Naive thymus-derived CD4-positive, alpha-beta T cell (primary cell): ENCODE measurements at regions of chr5 and their contacts with region 1.

Region 1: DNA sequence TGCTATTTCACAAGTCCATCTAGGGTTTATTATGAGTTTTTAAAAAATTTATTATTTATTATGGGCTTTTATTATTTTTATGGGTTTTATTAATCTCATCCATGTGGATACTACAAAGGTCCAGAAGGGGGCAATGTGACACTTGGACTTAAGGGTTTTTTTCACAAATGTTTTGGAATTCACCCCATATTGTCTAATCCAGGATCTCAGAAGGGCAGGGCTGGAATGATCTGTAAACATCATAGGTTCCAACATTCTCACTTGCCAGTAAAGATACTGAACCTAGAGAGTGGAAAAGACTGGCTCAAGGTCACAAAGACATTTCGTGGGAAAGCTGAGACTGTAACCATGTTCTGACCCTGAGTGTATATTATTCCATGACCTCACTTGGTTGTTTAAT is 35.6 kb downstream of the NIM1K start:
- DNase-seq: no peak
- ATAC-seq: no peak
- H3K4me3 ChIP-seq: no peak overlapping the region
- H3K4me3 Mint-ChIP-seq: no peak overlapping the region
- H3K27ac ChIP-seq: no peak overlapping the region
- H3K27ac Mint-ChIP-seq: no peak overlapping the region
- H3K4me1 ChIP-seq: no peaks in the 10 kb centered on the region
- H3K4me1 Mint-ChIP-seq: no peaks in the 10 kb centered on the region
- H3K27me3 ChIP-seq: no peaks in the 10 kb centered on the region
- H3K27me3 Mint-ChIP-seq: no peaks in the 10 kb centered on the region

Region 2: DNA sequence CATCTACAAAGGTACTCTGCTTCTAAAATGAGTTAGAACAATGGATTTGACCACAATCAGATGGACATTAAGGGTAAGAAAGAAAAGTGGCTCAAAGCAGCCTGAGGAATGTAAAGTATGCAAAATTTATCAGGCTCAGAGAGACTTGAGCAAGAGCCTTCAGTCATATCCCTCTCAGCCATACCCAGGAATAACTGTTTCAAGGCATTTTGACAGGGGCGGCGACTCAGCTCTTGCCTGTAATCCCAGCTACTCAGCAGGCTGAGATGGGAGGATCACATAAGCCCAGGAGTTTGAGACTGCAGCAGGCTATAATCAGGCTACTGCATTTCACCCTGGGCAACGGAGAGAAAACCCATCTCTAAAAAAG is 148.7 kb before region 1 on chr5:
- CTCF ChIA-PET with region 1: no interaction called
- POLR2A ChIA-PET with region 1: no interaction called
- intact Hi-C with region 1: no loop called
- DNase-seq: no peak
- ATAC-seq: no peak
- H3K4me3 ChIP-seq: no peak overlapping the region
- H3K4me3 Mint-ChIP-seq: no peak overlapping the region
- H3K27ac ChIP-seq: no peak overlapping the region
- H3K27ac Mint-ChIP-seq: no peak overlapping the region
- H3K4me1 ChIP-seq: peaks cover 5% of the 10 kb centered on the region in 2 donors
- H3K4me1 Mint-ChIP-seq: peaks cover 16 to 34% (median 27%) of the 10 kb centered on the region in 7 donors
- H3K27me3 ChIP-seq: no peaks in the 10 kb centered on the region
- H3K27me3 Mint-ChIP-seq: no peaks in the 10 kb centered on the region

Region 3: DNA sequence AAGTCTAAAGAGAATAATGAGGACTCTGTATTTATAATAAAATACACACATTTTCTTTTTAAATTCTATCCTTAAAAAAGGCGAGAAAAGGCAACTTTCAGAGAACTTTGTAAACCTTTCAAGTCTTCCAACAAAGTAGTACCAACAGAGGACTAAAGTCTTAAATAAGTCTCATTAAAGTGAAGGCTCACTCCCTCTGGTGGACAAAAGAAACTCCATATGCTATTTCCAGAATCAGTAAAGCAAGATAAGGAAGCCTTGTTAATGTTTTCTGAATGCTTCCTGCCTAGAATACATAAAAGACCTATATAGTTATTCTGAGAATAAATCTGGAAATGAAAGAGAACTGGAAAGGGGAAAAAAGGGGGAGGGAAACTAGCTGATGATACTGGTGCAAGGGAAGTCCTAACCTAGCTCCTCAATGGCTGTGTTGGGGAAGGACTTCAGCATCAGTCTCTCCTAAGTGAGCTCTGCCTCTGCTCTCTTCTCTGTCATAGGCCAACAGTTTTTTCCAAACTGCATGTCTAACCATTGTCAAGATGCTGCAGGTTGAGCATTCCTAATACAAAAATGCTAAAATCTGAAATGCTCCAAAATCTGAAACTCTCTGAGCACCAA is 78.4 kb after region 1 on chr5:
- CTCF ChIA-PET with region 1: no interaction called
- POLR2A ChIA-PET with region 1: no interaction called
- intact Hi-C with region 1: loop called in 1 of 2 experiments (anchors 2 kb)
- DNase-seq: peak in 7 of 9 donors; percentile 24 to 64 (median 50)
- ATAC-seq: peak; percentile 79
- H3K4me3 ChIP-seq: no peak overlapping the region
- H3K4me3 Mint-ChIP-seq: peak overlapping the region in 1 of 10 donors; percentile 18
- H3K27ac ChIP-seq: no peak overlapping the region
- H3K27ac Mint-ChIP-seq: peak overlapping the region in 6 of 9 donors; percentile 4 to 86 (median 30)
- H3K4me1 ChIP-seq: peaks cover 0 to 10% of the 10 kb centered on the region in 2 donors
- H3K4me1 Mint-ChIP-seq: peaks cover 21 to 82% (median 52%) of the 10 kb centered on the region in 7 donors
- H3K27me3 ChIP-seq: no peaks in the 10 kb centered on the region
- H3K27me3 Mint-ChIP-seq: no peaks in the 10 kb centered on the region

Region 4: GRCh38 chr5:43389679-43390329 is 162.1 kb after region 1 on chr5:
- CTCF ChIA-PET with region 1: no interaction called
- POLR2A ChIA-PET with region 1: no interaction called
- intact Hi-C with region 1: loop called in 1 of 2 experiments (anchors 5 kb)
- DNase-seq: peak in 8 of 9 donors; percentile 28 to 60 (median 50)
- ATAC-seq: peak; percentile 92
- H3K4me3 ChIP-seq: no peak overlapping the region
- H3K4me3 Mint-ChIP-seq: no peak overlapping the region
- H3K27ac ChIP-seq: no peak overlapping the region
- H3K27ac Mint-ChIP-seq: peak overlapping the region in 2 of 9 donors; percentile 62 to 67
- H3K4me1 ChIP-seq: peaks cover 0 to 7% of the 10 kb centered on the region in 2 donors
- H3K4me1 Mint-ChIP-seq: peaks cover 4 to 48% (median 34%) of the 10 kb centered on the region in 7 donors
- H3K27me3 ChIP-seq: no peaks in the 10 kb centered on the region
- H3K27me3 Mint-ChIP-seq: no peaks in the 10 kb centered on the region